ENCODE measurements at regions of chr12 and their contacts with region 1.

Region 1: GRCh38 chr12:31756977-31757420 is 28.2 kb upstream of the AMN1 start:
- DNase-seq: peak; percentile 21 to 62 (median 47)
- H3K4me3 ChIP-seq: no peak overlapping the region
- H3K4me3 Mint-ChIP-seq: no peak overlapping the region
- H3K27ac ChIP-seq: no peak overlapping the region
- H3K27ac Mint-ChIP-seq: peak overlapping the region in 3 of 7 donors; percentile 58 to 77 (median 66)
- H3K4me1 ChIP-seq: peaks cover 11 to 28% of the 10 kb centered on the region in 2 donors
- H3K4me1 Mint-ChIP-seq: peaks cover 24% of the 10 kb centered on the region
- H3K27me3 ChIP-seq: no peaks in the 10 kb centered on the region
- H3K27me3 Mint-ChIP-seq: no peaks in the 10 kb centered on the region
- CTCF ChIP-seq: no peak

Region 2: GRCh38 chr12:31659087-31659933 is 97.7 kb before region 1 on chr12 and contains the start of gene ETFBKMT:
- intact Hi-C with region 1: no loop called
- DNase-seq: peak; percentile 73 to 81 (median 75)
- H3K4me3 ChIP-seq: peak within 1 kb of the TSS; percentile 61 to 99 (median 96)
- H3K4me3 Mint-ChIP-seq: peak within 1 kb of the TSS; percentile 82 to 97
- H3K27ac ChIP-seq: peak within 1 kb of the TSS; percentile 93 to 98
- H3K27ac Mint-ChIP-seq: peak within 1 kb of the TSS; percentile 96 to 98 (median 98)
- H3K4me1 ChIP-seq: peaks cover 7 to 14% of the 10 kb centered on the region in 2 donors
- H3K4me1 Mint-ChIP-seq: peaks cover 14% of the 10 kb centered on the region
- H3K27me3 ChIP-seq: no peaks in the 10 kb centered on the region
- H3K27me3 Mint-ChIP-seq: peaks cover 0 to 2% (median 1%) of the 10 kb centered on the region in 3 donors
- CTCF ChIP-seq: no peak
- polyA plus RNA-seq, gene ETFBKMT: 0.67 to 2.2 (median 1.5) TPM

Region 3: DNA sequence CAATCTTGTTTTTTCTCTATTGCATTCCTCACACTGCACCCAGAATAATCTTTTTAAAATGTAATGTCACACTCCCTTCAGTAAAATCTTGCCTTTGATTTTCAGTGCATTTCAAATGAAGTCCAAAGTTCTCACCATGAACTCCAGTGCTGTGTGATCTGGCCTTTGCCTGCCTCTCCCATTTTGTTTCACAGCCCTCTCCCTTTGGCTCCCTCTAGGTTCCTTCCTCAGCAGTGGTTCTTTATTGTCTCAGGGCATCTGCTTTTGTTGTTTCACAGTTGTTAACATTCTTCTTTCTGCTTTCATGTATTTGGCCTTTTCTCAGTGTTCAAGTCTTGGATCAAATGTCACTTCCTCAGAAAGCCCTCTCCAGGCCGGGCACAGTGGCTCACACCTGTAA is 56.3 kb after region 1 on chr12:
- intact Hi-C with region 1: loop called in 1 of 2 experiments (anchors 10 kb)
- DNase-seq: no peak
- H3K4me3 ChIP-seq: no peak overlapping the region
- H3K4me3 Mint-ChIP-seq: no peak overlapping the region
- H3K27ac ChIP-seq: no peak overlapping the region
- H3K27ac Mint-ChIP-seq: peak overlapping the region in 1 of 7 donors; percentile 2
- H3K4me1 ChIP-seq: peaks cover 4% of the 10 kb centered on the region in 2 donors
- H3K4me1 Mint-ChIP-seq: peaks cover 19% of the 10 kb centered on the region
- H3K27me3 ChIP-seq: no peaks in the 10 kb centered on the region
- H3K27me3 Mint-ChIP-seq: peaks cover 0 to 3% (median 1%) of the 10 kb centered on the region in 3 donors
- CTCF ChIP-seq: no peak

Measured in CD14-positive monocyte (primary cell).